ENCODE measurements at regions of chr4 and their contacts with region 1.

Region 1: DNA sequence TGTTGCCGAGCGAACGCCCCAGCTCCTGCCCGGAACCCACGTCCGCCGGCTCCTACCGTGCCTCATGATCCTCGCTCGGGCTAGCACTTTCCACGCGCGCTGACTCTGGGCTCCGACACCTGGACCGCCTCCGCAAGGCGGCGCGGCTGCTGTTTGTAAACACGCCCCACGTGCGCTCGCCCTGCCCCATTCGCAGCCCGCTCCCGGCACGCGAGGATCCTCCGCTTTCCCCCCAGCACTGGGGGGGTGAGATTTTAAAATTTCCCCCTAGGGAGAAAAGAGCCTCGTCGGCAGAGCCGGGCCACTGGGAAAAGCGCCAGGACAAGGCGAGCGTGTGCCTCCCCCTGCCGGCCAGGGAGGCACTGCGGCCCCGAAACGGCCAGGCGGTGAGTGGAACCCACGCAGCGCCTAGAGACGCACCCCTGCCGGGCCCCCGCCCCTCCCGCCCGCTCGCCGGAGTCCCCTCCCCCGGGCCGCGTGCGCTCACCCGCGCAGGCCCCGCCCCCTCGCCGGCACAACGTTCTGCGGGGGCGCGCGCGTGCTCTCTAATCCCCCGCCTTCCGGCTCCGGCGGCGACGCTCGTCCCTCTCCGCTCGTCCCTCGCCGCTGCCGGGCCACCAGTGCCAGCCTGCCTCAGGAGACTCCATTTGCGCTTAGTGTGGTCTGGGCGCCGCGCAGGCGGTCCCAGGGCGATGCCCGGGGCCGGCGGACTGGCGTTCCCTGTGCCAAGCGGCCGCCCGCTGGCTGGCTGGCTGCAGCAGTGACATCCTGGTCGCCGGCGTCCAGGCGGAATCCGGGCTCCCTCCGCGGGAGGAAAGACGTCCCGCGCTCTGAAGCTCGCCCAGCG is at the start of gene TIGD2:
- DNase-seq: peak; percentile 82
- ATAC-seq: peak; percentile 95
- H3K4me3 Mint-ChIP-seq: peak within 1 kb of the TSS; percentile 88
- H3K27ac Mint-ChIP-seq: peak within 1 kb of the TSS; percentile 77
- H3K4me1 Mint-ChIP-seq: peaks cover 30% of the 10 kb centered on the region
- H3K27me3 Mint-ChIP-seq: no peaks in the 10 kb centered on the region
- CTCF ChIP-seq: peak; percentile 96
- total RNA-seq, gene TIGD2: 7.0 and 8.2 TPM in 2 replicates

Region 2: GRCh38 chr4:88456757-88457306 is 654.4 kb before region 1 on chr4 and contains the start of gene HERC5:
- CTCF ChIA-PET with region 1: no interaction called
- POLR2A ChIA-PET with region 1: no interaction called
- intact Hi-C with region 1: loop called (anchors 2 kb)
- DNase-seq: peak; percentile 84
- ATAC-seq: peak; percentile 96
- H3K4me3 Mint-ChIP-seq: peak within 1 kb of the TSS; percentile 100
- H3K27ac Mint-ChIP-seq: peak within 1 kb of the TSS; percentile 99
- H3K4me1 Mint-ChIP-seq: peaks cover 17% of the 10 kb centered on the region
- H3K27me3 Mint-ChIP-seq: no peaks in the 10 kb centered on the region
- CTCF ChIP-seq: no peak
- total RNA-seq, gene HERC5: 4.2 and 4.8 TPM in 2 replicates

Region 3: DNA sequence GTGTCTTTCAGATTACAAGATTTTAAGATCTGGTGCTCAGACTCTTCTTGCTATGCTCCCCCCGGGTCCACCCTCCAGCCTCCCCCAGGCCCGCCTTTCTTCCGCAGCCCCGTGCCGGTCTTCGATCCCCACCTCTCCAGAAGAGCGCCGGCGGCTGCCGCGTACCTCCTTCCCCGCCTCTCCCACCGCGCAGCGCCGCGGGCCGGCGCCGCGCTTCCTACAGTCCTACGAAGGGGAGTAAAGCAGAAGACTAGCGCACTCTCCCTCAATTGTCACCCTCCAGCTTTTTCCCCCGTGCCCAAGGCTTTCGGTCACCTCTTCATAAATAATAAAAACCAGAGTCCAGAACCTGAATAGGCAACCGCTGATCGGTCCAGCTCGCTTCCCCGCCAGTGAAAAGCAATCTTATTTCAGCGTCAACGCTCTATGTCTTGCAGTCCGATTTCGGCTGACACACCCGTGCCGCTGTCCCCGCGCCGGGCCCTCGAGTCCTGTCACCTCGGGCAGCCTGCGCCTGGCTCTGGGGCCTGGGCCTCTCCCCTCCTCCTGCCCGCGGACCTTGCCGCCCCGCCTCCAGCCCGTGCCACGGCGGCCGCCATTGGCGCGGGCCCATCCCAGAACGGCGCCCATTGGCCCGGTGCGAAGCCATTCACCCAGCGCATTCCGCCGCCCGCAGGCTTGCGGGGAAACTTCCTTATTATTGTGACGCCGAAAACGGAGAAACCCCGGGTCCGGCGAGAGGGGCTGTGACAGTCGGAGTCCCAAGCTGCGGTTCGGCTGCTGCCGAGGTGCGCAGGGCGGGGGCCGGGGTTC is 519.2 kb before region 1 on chr4 and contains the start of gene HERC3:
- CTCF ChIA-PET with region 1: no interaction called
- POLR2A ChIA-PET with region 1: no interaction called
- intact Hi-C with region 1: loop called (anchors 1 kb)
- DNase-seq: peak; percentile 87
- ATAC-seq: peak; percentile 93
- H3K4me3 Mint-ChIP-seq: peak within 1 kb of the TSS; percentile 94
- H3K27ac Mint-ChIP-seq: peak within 1 kb of the TSS; percentile 84
- H3K4me1 Mint-ChIP-seq: peaks cover 32% of the 10 kb centered on the region
- H3K27me3 Mint-ChIP-seq: no peaks in the 10 kb centered on the region
- CTCF ChIP-seq: no peak
- total RNA-seq, gene HERC3: 23.8 and 27.5 TPM in 2 replicates

Region 4: GRCh38 chr4:89024051-89024675 is 87.0 kb before region 1 on chr4:
- CTCF ChIA-PET with region 1: no interaction called
- POLR2A ChIA-PET with region 1: no interaction called
- intact Hi-C with region 1: loop called (anchors 1 kb)
- DNase-seq: no peak
- ATAC-seq: peak; percentile 89
- H3K4me3 Mint-ChIP-seq: no peak overlapping the region
- H3K27ac Mint-ChIP-seq: no peak overlapping the region
- H3K4me1 Mint-ChIP-seq: no peaks in the 10 kb centered on the region
- H3K27me3 Mint-ChIP-seq: no peaks in the 10 kb centered on the region
- CTCF ChIP-seq: no peak

Region 5: DNA sequence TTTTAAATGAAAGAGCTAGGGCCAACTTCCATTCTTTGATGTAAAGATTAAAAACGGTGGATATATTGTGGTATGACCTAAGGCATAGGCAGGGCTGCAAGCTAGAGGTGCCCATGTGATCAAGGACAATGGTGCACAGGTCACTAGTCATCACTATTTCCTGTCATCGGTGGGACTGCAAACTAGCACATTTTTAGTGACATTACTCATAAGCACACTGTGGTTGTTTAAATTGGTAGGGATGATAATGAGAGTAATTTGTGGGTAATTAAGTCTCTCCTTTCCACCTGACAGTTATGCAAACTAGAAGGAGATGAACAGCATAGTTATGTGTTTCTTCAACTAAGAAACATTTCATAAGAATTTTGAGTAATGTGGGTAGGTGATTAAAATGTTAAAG is 111.0 kb after region 1 on chr4:
- CTCF ChIA-PET with region 1: no interaction called
- POLR2A ChIA-PET with region 1: no interaction called
- intact Hi-C with region 1: no loop called
- DNase-seq: no peak
- ATAC-seq: no peak
- H3K4me3 Mint-ChIP-seq: no peak overlapping the region
- H3K27ac Mint-ChIP-seq: no peak overlapping the region
- H3K4me1 Mint-ChIP-seq: peaks cover 4% of the 10 kb centered on the region
- H3K27me3 Mint-ChIP-seq: no peaks in the 10 kb centered on the region
- CTCF ChIP-seq: no peak

Region 6: GRCh38 chr4:89324671-89325070 is 213.5 kb after region 1 on chr4:
- CTCF ChIA-PET with region 1: no interaction called
- POLR2A ChIA-PET with region 1: no interaction called
- intact Hi-C with region 1: loop called (anchors 2 kb)
- DNase-seq: no peak
- ATAC-seq: peak; percentile 98
- H3K4me3 Mint-ChIP-seq: peak overlapping the region; percentile 12
- H3K27ac Mint-ChIP-seq: peak overlapping the region; percentile 66
- H3K4me1 Mint-ChIP-seq: peaks cover 27% of the 10 kb centered on the region
- H3K27me3 Mint-ChIP-seq: no peaks in the 10 kb centered on the region
- CTCF ChIP-seq: no peak

Measured in activated B cell treated with CpG ODN at 0.5 μM for 24 hours (primary cell).